ENCODE measurements at regions of chr4 and their contacts with region 1.

Region 1: GRCh38 chr4:37826295-37827029 is at the start of gene PGM2:
- DNase-seq: peak; percentile 86 to 90 (median 88)
- H3K4me3 ChIP-seq: peak within 1 kb of the TSS; percentile 97 to 98
- H3K4me3 Mint-ChIP-seq: peak within 1 kb of the TSS; percentile 93 to 99 (median 97)
- H3K27ac ChIP-seq: peak within 1 kb of the TSS; percentile 69
- H3K27ac Mint-ChIP-seq: peak within 1 kb of the TSS; percentile 66 to 99 (median 96)
- H3K4me1 ChIP-seq: peaks cover 23% of the 10 kb centered on the region
- H3K4me1 Mint-ChIP-seq: peaks cover 23 to 56% (median 37%) of the 10 kb centered on the region in 4 donors
- H3K27me3 ChIP-seq: no peaks in the 10 kb centered on the region
- H3K27me3 Mint-ChIP-seq: no peaks in the 10 kb centered on the region
- total RNA-seq, gene PGM2: 16.9 to 18.4 TPM

Region 2: GRCh38 chr4:37977471-37978247 is 151.2 kb after region 1 on chr4:
- CTCF ChIA-PET with region 1: interaction called, 5 read pairs
- POLR2A ChIA-PET with region 1: interaction called, 5 read pairs
- intact Hi-C with region 1: loop called (anchors 1 kb)
- DNase-seq: peak; percentile 74 to 78 (median 77)
- H3K4me3 ChIP-seq: peak overlapping the region; percentile 67 to 69
- H3K4me3 Mint-ChIP-seq: peak overlapping the region; percentile 86 to 92 (median 88)
- H3K27ac ChIP-seq: peak overlapping the region; percentile 75
- H3K27ac Mint-ChIP-seq: peak overlapping the region; percentile 84 to 91 (median 88)
- H3K4me1 ChIP-seq: peaks cover 22% of the 10 kb centered on the region
- H3K4me1 Mint-ChIP-seq: peaks cover 16 to 40% (median 24%) of the 10 kb centered on the region in 4 donors
- H3K27me3 ChIP-seq: no peaks in the 10 kb centered on the region
- H3K27me3 Mint-ChIP-seq: no peaks in the 10 kb centered on the region

Measured in CD4-positive, alpha-beta memory T cell (primary cell).